ENCODE measurements at regions of chr6 and their contacts with region 1.

Region 1: GRCh38 chr6:107957909-107958688 is at the start of gene SEC63:
- DNase-seq: peak; percentile 95 to 98 (median 96)
- ATAC-seq: peak; percentile 97
- H3K4me3 ChIP-seq: peak within 1 kb of the TSS; percentile 91
- H3K4me3 Mint-ChIP-seq: peak within 1 kb of the TSS; percentile 98
- H3K27ac ChIP-seq: peak within 1 kb of the TSS; percentile 81 to 82
- H3K27ac Mint-ChIP-seq: peak within 1 kb of the TSS; percentile 92
- H3K4me1 ChIP-seq: peaks cover 16% of the 10 kb centered on the region
- H3K4me1 Mint-ChIP-seq: peaks cover 37% of the 10 kb centered on the region
- H3K27me3 ChIP-seq: no peaks in the 10 kb centered on the region
- H3K27me3 Mint-ChIP-seq: no peaks in the 10 kb centered on the region
- CTCF ChIP-seq: no peak
- total RNA-seq, gene SEC63: 77.8 to 88.2 TPM

Region 2: GRCh38 chr6:107021446-107022185 is 936.5 kb before region 1 on chr6:
- CTCF ChIA-PET with region 1: no interaction called
- POLR2A ChIA-PET with region 1: no interaction called
- intact Hi-C with region 1: loop called in 1 of 2 experiments (anchors 10 kb)
- DNase-seq: no peak
- ATAC-seq: no peak
- H3K4me3 ChIP-seq: no peak overlapping the region
- H3K4me3 Mint-ChIP-seq: no peak overlapping the region
- H3K27ac ChIP-seq: no peak overlapping the region
- H3K27ac Mint-ChIP-seq: no peak overlapping the region
- H3K4me1 ChIP-seq: no peaks in the 10 kb centered on the region
- H3K4me1 Mint-ChIP-seq: no peaks in the 10 kb centered on the region
- H3K27me3 ChIP-seq: no peaks in the 10 kb centered on the region
- H3K27me3 Mint-ChIP-seq: peaks cover 2% of the 10 kb centered on the region
- CTCF ChIP-seq: no peak

Region 3: DNA sequence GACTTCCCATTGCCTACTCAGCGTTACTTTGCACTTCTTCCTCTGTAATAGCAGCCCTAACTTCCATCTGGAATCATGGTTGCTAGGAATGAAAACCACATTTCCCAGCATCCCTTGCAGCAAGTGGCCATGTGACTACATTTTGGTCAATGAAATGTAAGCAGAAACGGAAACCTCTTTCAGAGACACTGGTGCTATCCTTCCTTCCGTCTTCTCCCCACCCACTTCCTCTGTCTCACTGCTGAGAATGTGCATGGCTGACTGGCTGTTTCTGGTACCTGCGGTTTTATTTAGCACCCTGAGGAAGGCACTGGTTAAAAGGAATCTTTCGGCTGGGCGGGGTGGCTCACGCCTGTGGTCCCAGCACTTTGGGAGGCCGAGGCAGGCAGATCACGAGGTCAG is 241.4 kb before region 1 on chr6:
- CTCF ChIA-PET with region 1: no interaction called
- POLR2A ChIA-PET with region 1: no interaction called
- intact Hi-C with region 1: loop called (anchors 2 to 5 kb)
- DNase-seq: peak; percentile 46 to 95 (median 76)
- ATAC-seq: peak; percentile 85
- H3K4me3 ChIP-seq: no peak overlapping the region
- H3K4me3 Mint-ChIP-seq: peak overlapping the region; percentile 68
- H3K27ac ChIP-seq: peak overlapping the region in 1 of 2 experiments; percentile 79
- H3K27ac Mint-ChIP-seq: peak overlapping the region; percentile 91
- H3K4me1 ChIP-seq: peaks cover 54% of the 10 kb centered on the region
- H3K4me1 Mint-ChIP-seq: peaks cover 77% of the 10 kb centered on the region
- H3K27me3 ChIP-seq: no peaks in the 10 kb centered on the region
- H3K27me3 Mint-ChIP-seq: no peaks in the 10 kb centered on the region
- CTCF ChIP-seq: no peak

Region 4: DNA sequence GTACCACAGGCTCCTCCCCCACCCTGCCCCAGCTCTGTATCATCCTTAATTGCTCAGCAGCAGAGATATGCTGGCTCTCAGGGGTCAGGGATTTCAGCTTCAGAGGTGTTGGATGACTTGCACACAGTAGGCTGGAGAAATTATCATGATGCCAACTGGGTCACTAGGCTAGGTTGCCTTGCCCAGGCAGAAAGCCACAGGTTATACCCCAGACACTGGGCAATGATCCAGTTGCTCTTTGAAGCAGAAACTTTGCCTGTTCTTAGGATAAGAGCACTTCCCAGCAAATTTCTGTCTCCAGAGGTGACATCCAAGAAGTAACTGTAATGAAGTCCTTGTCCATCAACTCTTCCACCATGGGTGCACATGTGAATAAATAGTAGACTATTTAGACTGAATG is 95.7 kb before region 1 on chr6:
- CTCF ChIA-PET with region 1: no interaction called
- POLR2A ChIA-PET with region 1: no interaction called
- intact Hi-C with region 1: no loop called
- DNase-seq: no peak
- ATAC-seq: no peak
- H3K4me3 ChIP-seq: no peak overlapping the region
- H3K4me3 Mint-ChIP-seq: no peak overlapping the region
- H3K27ac ChIP-seq: no peak overlapping the region
- H3K27ac Mint-ChIP-seq: no peak overlapping the region
- H3K4me1 ChIP-seq: no peaks in the 10 kb centered on the region
- H3K4me1 Mint-ChIP-seq: no peaks in the 10 kb centered on the region
- H3K27me3 ChIP-seq: no peaks in the 10 kb centered on the region
- H3K27me3 Mint-ChIP-seq: no peaks in the 10 kb centered on the region
- CTCF ChIP-seq: no peak

Region 5: DNA sequence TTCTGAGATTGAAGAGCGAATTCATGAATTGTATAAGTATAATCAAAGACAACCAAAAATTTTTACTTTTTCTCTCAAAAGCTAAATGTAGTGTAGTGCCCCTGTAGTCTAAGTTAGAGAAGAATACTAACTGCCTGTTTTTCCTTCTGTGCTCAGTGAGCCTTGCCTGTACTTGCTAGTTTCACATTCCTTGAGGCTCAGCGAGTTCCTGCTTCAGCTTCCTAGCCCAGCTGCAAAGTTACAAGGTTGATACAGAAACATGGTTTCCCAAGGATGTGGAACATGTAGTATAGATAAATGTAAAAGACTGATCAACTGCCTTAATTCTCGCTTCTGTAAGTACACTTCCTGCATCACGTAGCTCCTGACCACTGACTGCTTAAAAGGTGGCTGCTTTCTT is 33.0 kb after region 1 on chr6:
- CTCF ChIA-PET with region 1: no interaction called
- POLR2A ChIA-PET with region 1: no interaction called
- intact Hi-C with region 1: no loop called
- DNase-seq: no peak
- ATAC-seq: no peak
- H3K4me3 ChIP-seq: no peak overlapping the region
- H3K4me3 Mint-ChIP-seq: no peak overlapping the region
- H3K27ac ChIP-seq: no peak overlapping the region
- H3K27ac Mint-ChIP-seq: no peak overlapping the region
- H3K4me1 ChIP-seq: no peaks in the 10 kb centered on the region
- H3K4me1 Mint-ChIP-seq: peaks cover 2% of the 10 kb centered on the region
- H3K27me3 ChIP-seq: no peaks in the 10 kb centered on the region
- H3K27me3 Mint-ChIP-seq: peaks cover 2% of the 10 kb centered on the region
- CTCF ChIP-seq: no peak

Region 6: DNA sequence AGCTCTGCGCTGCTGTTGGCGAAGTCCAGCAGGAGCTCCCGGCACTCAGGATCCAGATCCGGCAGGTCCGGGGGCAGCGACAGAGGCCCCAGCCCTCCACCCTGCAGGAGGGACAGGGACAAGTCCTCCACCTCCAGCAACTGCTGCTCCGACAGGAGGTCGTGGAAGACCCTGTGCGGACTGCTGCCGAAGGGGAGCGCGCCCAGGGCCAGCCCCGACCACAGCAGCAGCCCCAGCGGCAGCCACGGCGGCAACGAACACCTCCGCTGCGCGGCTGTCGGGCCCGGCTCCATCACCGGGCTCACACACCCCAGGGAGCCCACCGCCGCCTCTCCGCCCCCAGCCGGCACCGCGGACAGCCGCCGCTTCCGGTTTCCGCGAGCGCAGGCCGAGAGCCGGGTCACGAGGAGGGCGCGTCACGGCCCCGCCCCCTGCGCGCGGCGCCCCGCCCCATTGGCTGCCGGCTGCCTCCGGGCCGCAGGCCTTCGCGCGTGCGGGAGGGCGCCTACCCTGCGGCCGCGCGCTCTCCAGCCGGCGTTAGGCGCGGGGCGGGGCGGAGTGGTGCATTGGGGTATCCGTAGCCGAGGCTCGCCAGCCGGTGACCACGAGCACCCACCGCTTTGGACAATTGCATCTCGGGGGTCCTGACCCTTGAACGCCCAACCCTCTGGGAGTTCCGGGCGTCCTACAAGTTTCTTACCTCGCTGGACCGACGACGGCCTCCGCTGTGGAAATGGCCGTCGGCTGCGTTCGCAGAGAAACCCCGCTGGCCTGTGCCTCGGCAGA is 116.5 kb after region 1 on chr6 and contains the start of gene OSTM1:
- CTCF ChIA-PET with region 1: no interaction called
- POLR2A ChIA-PET with region 1: no interaction called
- intact Hi-C with region 1: loop called (anchors 1 kb)
- DNase-seq: peak; percentile 89 to 97 (median 94)
- ATAC-seq: peak; percentile 96
- H3K4me3 ChIP-seq: peak within 1 kb of the TSS; percentile 98 to 99
- H3K4me3 Mint-ChIP-seq: peak within 1 kb of the TSS; percentile 89
- H3K27ac ChIP-seq: peak within 1 kb of the TSS; percentile 85 to 88
- H3K27ac Mint-ChIP-seq: peak within 1 kb of the TSS; percentile 88
- H3K4me1 ChIP-seq: peaks cover 19% of the 10 kb centered on the region
- H3K4me1 Mint-ChIP-seq: peaks cover 29% of the 10 kb centered on the region
- H3K27me3 ChIP-seq: no peaks in the 10 kb centered on the region
- H3K27me3 Mint-ChIP-seq: peaks cover 2% of the 10 kb centered on the region
- CTCF ChIP-seq: no peak
- total RNA-seq, gene OSTM1: 20.0 to 25.0 TPM

Region 7: DNA sequence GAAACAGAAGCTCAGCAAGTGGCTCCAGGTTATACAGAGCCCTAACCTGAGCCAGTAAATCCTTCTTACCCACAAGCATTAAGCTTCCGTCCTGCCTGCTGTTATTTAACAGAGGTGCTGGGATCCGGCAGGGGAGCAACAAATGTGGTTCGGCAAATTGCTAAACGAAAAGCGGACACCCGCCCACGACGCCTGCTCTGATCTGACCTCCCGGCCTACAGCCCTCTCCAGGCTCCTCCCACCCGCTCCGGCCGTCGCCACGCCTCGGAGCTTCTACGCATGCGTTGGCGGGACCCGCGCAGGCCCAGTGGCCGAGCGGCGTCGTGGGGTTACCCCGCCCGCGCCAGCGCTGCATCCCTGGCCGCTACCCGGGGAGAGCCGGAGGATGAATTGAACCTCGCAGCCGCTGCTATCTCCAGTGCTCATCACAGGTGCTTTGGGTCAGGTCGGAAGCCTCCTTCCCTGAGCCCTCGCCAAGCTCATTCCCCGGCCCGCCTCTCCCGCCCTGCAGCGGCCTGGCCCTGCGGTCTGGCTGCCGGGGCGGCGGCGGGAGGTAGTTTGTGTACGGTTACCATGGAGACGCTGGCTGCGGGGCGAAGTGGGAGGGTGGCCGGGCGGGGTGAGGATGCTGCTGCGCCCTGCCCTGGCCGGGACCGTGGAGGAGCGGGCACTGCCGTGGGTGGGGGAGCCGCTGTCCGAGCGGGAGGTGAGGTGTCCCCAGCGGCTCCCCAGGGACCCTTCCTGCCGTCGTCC is 890.2 kb after region 1 on chr6 and contains the start of gene ARMC2:
- CTCF ChIA-PET with region 1: no interaction called
- POLR2A ChIA-PET with region 1: no interaction called
- intact Hi-C with region 1: loop called in 1 of 2 experiments (anchors 1 kb)
- DNase-seq: peak; percentile 65 to 94 (median 85)
- ATAC-seq: peak; percentile 88
- H3K4me3 ChIP-seq: peak within 1 kb of the TSS; percentile 63 to 80
- H3K4me3 Mint-ChIP-seq: peak within 1 kb of the TSS; percentile 88
- H3K27ac ChIP-seq: peak within 1 kb of the TSS; percentile 67 to 73
- H3K27ac Mint-ChIP-seq: peak within 1 kb of the TSS; percentile 66
- H3K4me1 ChIP-seq: peaks cover 11% of the 10 kb centered on the region
- H3K4me1 Mint-ChIP-seq: peaks cover 29% of the 10 kb centered on the region
- H3K27me3 ChIP-seq: no peaks in the 10 kb centered on the region
- H3K27me3 Mint-ChIP-seq: no peaks in the 10 kb centered on the region
- CTCF ChIP-seq: no peak
- total RNA-seq, gene ARMC2: 4.2 to 6.1 TPM